ENCODE measurements at regions of chr4 and their contacts with region 1.

Region 1: GRCh38 chr4:57110640-57111511 is 691 bp upstream of the IGFBP7 start:
- DNase-seq: no peak
- ATAC-seq: peak; percentile 63
- H3K4me3 ChIP-seq: peak overlapping the region; percentile 27 to 42
- H3K27ac ChIP-seq: no peak overlapping the region
- H3K4me1 ChIP-seq: no peaks in the 10 kb centered on the region
- H3K27me3 ChIP-seq: peaks cover 8% of the 10 kb centered on the region
- CTCF ChIP-seq: no peak

Region 2: DNA sequence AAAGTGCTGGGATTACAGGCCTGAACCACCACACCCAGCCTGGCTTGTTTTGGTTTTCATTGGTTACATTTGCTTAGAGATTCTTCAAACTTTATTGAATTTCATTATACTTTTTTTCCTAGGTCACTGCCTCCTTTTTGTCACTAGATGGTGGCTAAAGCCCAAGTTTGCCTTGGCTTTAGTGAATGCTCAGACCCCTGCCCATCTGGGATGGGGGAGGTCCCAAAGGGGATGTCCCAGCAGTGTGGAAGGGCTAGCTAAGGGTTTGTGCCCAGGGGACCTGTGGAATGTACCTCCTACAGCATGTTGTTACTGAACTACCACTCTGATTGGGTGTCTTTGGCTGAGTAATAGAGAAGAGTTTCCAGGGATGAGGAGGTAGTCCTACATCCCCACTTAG is 1103.7 kb before region 1 on chr4:
- CTCF ChIA-PET with region 1: no interaction called
- POLR2A ChIA-PET with region 1: interaction called, 13 read pairs
- in situ Hi-C with region 1: no loop called
- intact Hi-C with region 1: no loop called
- DNase-seq: no peak
- ATAC-seq: no peak
- H3K4me3 ChIP-seq: no peak overlapping the region
- H3K27ac ChIP-seq: no peak overlapping the region
- H3K4me1 ChIP-seq: no peaks in the 10 kb centered on the region
- H3K27me3 ChIP-seq: no peaks in the 10 kb centered on the region
- CTCF ChIP-seq: no peak

Region 3: GRCh38 chr4:56048702-56049431 is 1062.0 kb before region 1 on chr4:
- CTCF ChIA-PET with region 1: no interaction called
- POLR2A ChIA-PET with region 1: no interaction called
- in situ Hi-C with region 1: no loop called
- intact Hi-C with region 1: loop called (anchors 10 kb)
- DNase-seq: no peak
- ATAC-seq: peak; percentile 92
- H3K4me3 ChIP-seq: peak overlapping the region; percentile 59 to 63
- H3K27ac ChIP-seq: no peak overlapping the region
- H3K4me1 ChIP-seq: no peaks in the 10 kb centered on the region; the same call in 1 of the 2 replicates
- H3K27me3 ChIP-seq: no peaks in the 10 kb centered on the region; the same call in none of the 2 replicates
- CTCF ChIP-seq: peak; percentile 71

Region 4: GRCh38 chr4:56953680-56954520 is 157.0 kb before region 1 on chr4:
- CTCF ChIA-PET with region 1: no interaction called
- POLR2A ChIA-PET with region 1: no interaction called
- in situ Hi-C with region 1: no loop called
- intact Hi-C with region 1: no loop called
- DNase-seq: no peak
- ATAC-seq: no peak
- H3K4me3 ChIP-seq: no peak overlapping the region
- H3K27ac ChIP-seq: no peak overlapping the region
- H3K4me1 ChIP-seq: no peaks in the 10 kb centered on the region
- H3K27me3 ChIP-seq: no peaks in the 10 kb centered on the region
- CTCF ChIP-seq: no peak

Region 5: DNA sequence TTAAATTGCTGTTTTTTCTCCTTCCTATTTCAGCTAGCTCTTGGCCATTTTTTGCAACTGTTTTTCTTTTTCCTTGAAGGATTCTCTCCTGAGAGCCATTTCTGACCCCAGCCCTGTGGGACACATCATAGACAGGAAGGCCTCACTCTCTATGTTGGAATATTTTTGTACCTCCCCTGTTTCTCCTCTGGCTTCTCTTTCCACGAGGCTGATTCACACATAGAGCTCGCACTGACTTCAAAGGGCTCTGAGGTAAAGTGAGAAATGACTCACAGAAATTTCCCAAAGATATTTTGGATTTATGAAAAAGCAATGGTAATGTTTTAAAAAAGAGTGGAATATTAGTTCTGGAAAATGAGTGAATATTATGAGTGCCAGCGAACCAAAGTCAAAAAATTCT is 181.0 kb after region 1 on chr4:
- CTCF ChIA-PET with region 1: no interaction called
- POLR2A ChIA-PET with region 1: no interaction called
- in situ Hi-C with region 1: no loop called
- intact Hi-C with region 1: no loop called
- DNase-seq: no peak
- ATAC-seq: no peak
- H3K4me3 ChIP-seq: no peak overlapping the region
- H3K27ac ChIP-seq: no peak overlapping the region
- H3K4me1 ChIP-seq: no peaks in the 10 kb centered on the region
- H3K27me3 ChIP-seq: no peaks in the 10 kb centered on the region
- CTCF ChIP-seq: no peak